Naive thymus-derived CD4-positive, alpha-beta T cell (primary cell): ENCODE measurements at regions of chr2 and their contacts with region 1.

Region 1: GRCh38 chr2:86675511-86676015 is 44.5 kb upstream of the RMND5A start:
- DNase-seq: peak in 2 of 9 donors; percentile 11 to 13
- ATAC-seq: no peak
- H3K4me3 ChIP-seq: no peak overlapping the region
- H3K4me3 Mint-ChIP-seq: no peak overlapping the region
- H3K27ac ChIP-seq: no peak overlapping the region
- H3K27ac Mint-ChIP-seq: peak overlapping the region in 1 of 9 donors; percentile 3
- H3K4me1 ChIP-seq: no peaks in the 10 kb centered on the region
- H3K4me1 Mint-ChIP-seq: peaks cover 0 to 1% (median 0%) of the 10 kb centered on the region in 7 donors
- H3K27me3 ChIP-seq: no peaks in the 10 kb centered on the region
- H3K27me3 Mint-ChIP-seq: peaks cover 0 to 3% (median 0%) of the 10 kb centered on the region in 5 donors

Region 2: GRCh38 chr2:86118133-86118532 is 557.4 kb before region 1 on chr2:
- CTCF ChIA-PET with region 1: no interaction called
- POLR2A ChIA-PET with region 1: no interaction called
- intact Hi-C with region 1: no loop called
- DNase-seq: no peak
- ATAC-seq: no peak
- H3K4me3 ChIP-seq: no peak overlapping the region
- H3K4me3 Mint-ChIP-seq: no peak overlapping the region
- H3K27ac ChIP-seq: no peak overlapping the region
- H3K27ac Mint-ChIP-seq: no peak overlapping the region
- H3K4me1 ChIP-seq: no peaks in the 10 kb centered on the region
- H3K4me1 Mint-ChIP-seq: peaks cover 5 to 19% (median 9%) of the 10 kb centered on the region in 7 donors
- H3K27me3 ChIP-seq: no peaks in the 10 kb centered on the region
- H3K27me3 Mint-ChIP-seq: no peaks in the 10 kb centered on the region

Region 3: GRCh38 chr2:86368161-86368824 is 307.3 kb before region 1 on chr2:
- CTCF ChIA-PET with region 1: no interaction called
- POLR2A ChIA-PET with region 1: no interaction called
- intact Hi-C with region 1: loop called in 1 of 2 experiments (anchors 10 kb)
- DNase-seq: peak; percentile 12 to 51 (median 43)
- ATAC-seq: peak; percentile 75
- H3K4me3 ChIP-seq: peak overlapping the region; percentile 50
- H3K4me3 Mint-ChIP-seq: peak overlapping the region; percentile 43 to 84 (median 70)
- H3K27ac ChIP-seq: no peak overlapping the region
- H3K27ac Mint-ChIP-seq: peak overlapping the region in 8 of 9 donors; percentile 60 to 94 (median 82)
- H3K4me1 ChIP-seq: peaks cover 6 to 51% of the 10 kb centered on the region in 2 donors
- H3K4me1 Mint-ChIP-seq: peaks cover 24 to 77% (median 63%) of the 10 kb centered on the region in 7 donors
- H3K27me3 ChIP-seq: no peaks in the 10 kb centered on the region
- H3K27me3 Mint-ChIP-seq: no peaks in the 10 kb centered on the region

Region 4: DNA sequence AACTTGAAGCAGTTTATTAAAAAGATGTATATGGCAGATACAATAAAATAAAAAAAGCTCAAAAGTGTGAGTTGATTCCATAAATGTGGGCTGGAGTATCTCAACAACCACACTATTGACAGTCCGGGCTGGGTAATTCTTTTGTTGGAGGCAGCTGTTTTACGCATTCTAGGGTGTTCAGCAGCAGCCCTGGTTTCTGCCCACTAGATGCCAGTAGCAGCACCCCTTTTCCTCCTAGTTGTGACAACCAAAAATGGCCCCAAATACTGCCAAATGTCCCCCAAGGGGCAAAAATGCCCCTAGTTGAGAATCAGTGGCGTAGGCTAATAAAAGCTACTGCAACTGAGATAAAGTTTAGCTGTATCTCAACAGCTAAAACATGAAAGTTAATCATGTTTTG is 157.1 kb before region 1 on chr2:
- CTCF ChIA-PET with region 1: interaction called, 27 read pairs
- POLR2A ChIA-PET with region 1: no interaction called
- intact Hi-C with region 1: loop called in 1 of 2 experiments (anchors 1 kb)
- DNase-seq: peak in 7 of 9 donors; percentile 23 to 59 (median 53)
- ATAC-seq: peak; percentile 73
- H3K4me3 ChIP-seq: no peak overlapping the region
- H3K4me3 Mint-ChIP-seq: no peak overlapping the region
- H3K27ac ChIP-seq: no peak overlapping the region
- H3K27ac Mint-ChIP-seq: peak overlapping the region in 1 of 9 donors; percentile 2
- H3K4me1 ChIP-seq: no peaks in the 10 kb centered on the region
- H3K4me1 Mint-ChIP-seq: peaks cover 0 to 16% (median 8%) of the 10 kb centered on the region in 7 donors
- H3K27me3 ChIP-seq: no peaks in the 10 kb centered on the region
- H3K27me3 Mint-ChIP-seq: no peaks in the 10 kb centered on the region